CD8-positive, alpha-beta memory T cell (primary cell): ENCODE measurements at regions of chr16 and their contacts with region 1.

Region 1: DNA sequence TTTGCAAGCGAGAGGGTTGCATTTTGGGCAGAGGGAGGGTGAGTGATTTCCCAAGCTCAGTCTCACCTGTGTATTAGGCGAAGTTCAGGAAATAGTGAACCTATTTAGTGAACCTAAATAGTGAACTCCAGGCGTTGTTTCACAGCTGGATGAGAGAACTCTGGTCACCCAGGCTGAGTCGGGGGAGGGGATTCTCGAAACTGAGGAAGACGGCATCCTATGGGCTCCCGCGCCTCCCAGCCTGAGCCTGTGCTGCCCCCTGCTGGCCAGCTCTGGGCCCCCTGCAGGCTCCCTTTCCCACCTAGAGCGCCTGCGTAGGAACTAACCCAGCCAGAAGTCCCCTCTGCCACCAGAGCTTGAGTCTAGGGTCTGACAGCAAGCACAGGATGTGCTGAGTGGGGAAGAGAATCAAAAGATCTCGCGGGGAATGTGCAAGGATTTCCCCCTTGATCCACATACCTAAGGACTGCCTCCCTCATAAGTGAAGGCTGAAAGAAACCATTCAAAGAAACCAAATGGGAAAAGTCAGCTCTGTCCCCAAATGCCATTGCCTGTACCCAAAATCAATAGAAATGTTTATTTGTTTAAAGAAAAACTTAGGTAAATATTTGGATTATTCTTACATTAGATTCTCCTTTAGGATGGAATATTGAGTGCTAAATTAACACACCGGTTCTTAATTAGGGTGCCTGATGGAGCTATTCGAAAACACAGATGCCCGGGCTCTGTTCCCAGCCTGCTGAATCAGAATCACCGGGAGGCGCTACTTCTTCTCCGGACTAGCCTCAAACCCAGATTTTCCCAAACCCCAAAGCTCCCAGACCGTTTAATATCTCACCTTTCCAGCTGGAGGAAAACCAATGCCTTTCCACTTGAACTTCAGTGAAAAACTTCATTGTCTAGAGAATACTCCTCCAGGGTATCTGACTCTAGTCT is 14.8 kb upstream of the MARVELD3 start:
- DNase-seq: peak; percentile 54 to 81 (median 66)
- H3K4me3 ChIP-seq: no peak overlapping the region
- H3K4me3 Mint-ChIP-seq: peak overlapping the region in 1 of 7 donors; percentile 28
- H3K27ac ChIP-seq: no peak overlapping the region
- H3K27ac Mint-ChIP-seq: peak overlapping the region in 2 of 8 donors; percentile 29 to 51
- H3K4me1 ChIP-seq: no peaks in the 10 kb centered on the region
- H3K4me1 Mint-ChIP-seq: peaks cover 0 to 6% (median 3%) of the 10 kb centered on the region in 3 donors
- H3K27me3 ChIP-seq: no peaks in the 10 kb centered on the region
- H3K27me3 Mint-ChIP-seq: peaks cover 12 to 39% of the 10 kb centered on the region in 2 donors

Region 2: DNA sequence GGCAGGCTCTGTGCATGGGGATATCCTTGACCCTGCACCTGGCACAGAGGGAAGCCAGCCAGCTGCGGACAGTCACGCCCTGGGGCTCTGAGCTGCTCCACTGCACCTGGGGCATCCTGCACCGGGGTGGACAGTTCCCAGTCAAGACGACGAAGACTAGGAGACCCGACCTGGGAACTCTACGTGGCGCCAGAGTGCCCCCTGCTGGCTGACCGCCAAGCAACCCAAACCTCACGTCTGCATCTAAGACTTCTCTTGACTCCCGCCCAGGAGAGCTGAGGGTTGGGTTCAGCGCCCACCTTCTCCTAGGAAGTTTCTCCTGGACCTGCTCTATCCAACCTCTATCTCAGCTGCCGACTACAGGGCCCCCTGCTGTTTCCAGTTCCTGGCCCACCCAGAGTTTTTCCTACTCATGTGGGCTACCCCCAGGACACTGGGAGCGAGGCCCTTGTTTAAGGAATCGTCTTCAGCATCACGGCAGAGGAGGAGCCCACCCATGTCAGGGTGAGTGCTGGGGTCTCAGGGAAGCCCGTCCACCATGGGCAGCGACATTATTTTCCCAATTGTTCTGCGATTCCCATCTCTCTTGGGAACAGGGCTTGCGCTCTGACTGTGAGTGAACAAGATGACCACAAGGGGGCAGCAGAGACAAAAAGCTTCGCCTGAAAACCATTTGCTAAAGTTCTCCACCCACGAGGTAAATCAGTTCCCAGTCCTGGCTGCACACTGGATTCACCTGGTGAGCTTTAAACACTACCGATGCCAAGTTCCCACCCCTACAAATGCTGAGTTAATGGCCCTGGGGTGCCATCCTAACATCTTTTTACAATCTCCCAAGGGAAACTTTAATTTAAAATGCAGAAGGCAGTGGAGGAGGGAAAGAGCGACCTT is 198.7 kb before region 1 on chr16:
- CTCF ChIA-PET with region 1: interaction called, 18 read pairs
- POLR2A ChIA-PET with region 1: no interaction called
- DNase-seq: peak; percentile 46 to 67 (median 50)
- H3K4me3 ChIP-seq: no peak overlapping the region
- H3K4me3 Mint-ChIP-seq: no peak overlapping the region
- H3K27ac ChIP-seq: no peak overlapping the region
- H3K27ac Mint-ChIP-seq: no peak overlapping the region
- H3K4me1 ChIP-seq: peaks cover 6% of the 10 kb centered on the region
- H3K4me1 Mint-ChIP-seq: peaks cover 10 to 16% (median 16%) of the 10 kb centered on the region in 3 donors
- H3K27me3 ChIP-seq: no peaks in the 10 kb centered on the region
- H3K27me3 Mint-ChIP-seq: peaks cover 5 to 49% of the 10 kb centered on the region in 2 donors

Region 3: DNA sequence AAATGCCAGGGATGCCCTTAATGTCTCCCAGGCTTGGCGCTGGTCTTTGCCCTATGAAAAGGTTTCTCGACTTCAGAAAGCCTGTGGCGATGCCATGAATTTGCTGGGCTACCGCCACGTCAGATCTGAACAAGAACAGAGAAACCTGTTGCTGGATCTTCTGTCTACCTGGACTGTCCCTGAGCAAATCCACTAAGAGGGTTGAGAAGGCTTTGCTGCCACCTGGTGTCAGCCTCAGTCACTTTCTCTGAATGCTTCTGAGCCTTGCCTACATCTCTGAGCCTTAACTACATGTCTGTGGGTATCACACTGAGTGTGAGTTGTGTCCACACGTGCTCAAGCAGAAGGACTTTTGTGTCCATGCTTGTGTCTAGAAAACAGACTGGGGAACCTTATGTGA is 73.6 kb before region 1 on chr16:
- CTCF ChIA-PET with region 1: interaction called, 10 read pairs
- POLR2A ChIA-PET with region 1: no interaction called
- DNase-seq: peak in 1 of 5 donors; percentile 10
- H3K4me3 ChIP-seq: no peak overlapping the region
- H3K4me3 Mint-ChIP-seq: no peak overlapping the region
- H3K27ac ChIP-seq: no peak overlapping the region
- H3K27ac Mint-ChIP-seq: no peak overlapping the region
- H3K4me1 ChIP-seq: no peaks in the 10 kb centered on the region
- H3K4me1 Mint-ChIP-seq: peaks cover 0 to 3% (median 3%) of the 10 kb centered on the region in 3 donors
- H3K27me3 ChIP-seq: no peaks in the 10 kb centered on the region
- H3K27me3 Mint-ChIP-seq: peaks cover 7 to 10% of the 10 kb centered on the region in 2 donors

Region 4: DNA sequence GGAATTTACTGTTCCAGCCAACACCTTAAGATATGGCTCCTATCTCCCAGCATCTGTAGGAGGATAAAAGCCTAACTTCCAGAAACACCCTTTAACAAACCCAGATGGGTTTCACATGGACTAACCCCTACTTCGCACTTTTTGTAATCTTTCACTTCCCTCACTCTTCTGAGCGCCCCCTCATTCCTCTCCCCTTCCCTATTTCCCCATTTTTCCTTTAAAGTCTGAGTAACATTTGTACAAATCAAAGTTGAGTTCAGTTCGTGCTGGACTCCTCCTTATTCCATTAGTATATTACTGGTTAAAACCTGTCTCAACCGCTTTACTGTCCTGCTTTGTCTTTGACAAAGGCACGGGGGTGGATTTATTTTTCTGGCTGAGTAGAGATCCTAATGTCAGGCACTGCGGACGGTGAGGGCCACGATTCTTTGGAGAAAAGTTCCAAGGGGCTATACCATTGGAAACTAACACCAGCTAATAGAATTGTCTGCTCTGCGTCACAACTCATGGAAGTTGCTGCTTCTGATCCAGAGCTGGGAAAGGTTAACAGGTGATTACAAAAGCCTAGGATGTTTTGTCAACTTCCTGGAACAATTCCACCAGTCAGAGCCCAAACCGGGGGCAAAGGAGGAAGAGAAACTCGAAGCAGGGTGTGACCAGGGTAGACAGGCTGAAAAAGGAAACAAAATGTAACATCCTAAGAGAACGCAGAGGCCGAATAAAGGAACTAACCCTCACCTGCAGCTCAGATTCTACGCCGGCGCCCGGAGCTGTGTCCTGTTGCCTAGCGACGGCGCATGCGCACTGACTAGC is 46.8 kb before region 1 on chr16:
- CTCF ChIA-PET with region 1: interaction called, 48 read pairs
- POLR2A ChIA-PET with region 1: interaction called, 12 read pairs
- DNase-seq: peak in 1 of 5 donors; percentile 2
- H3K4me3 ChIP-seq: peak overlapping the region; percentile 67
- H3K4me3 Mint-ChIP-seq: peak overlapping the region; percentile 81 to 97 (median 90)
- H3K27ac ChIP-seq: peak overlapping the region; percentile 76
- H3K27ac Mint-ChIP-seq: peak overlapping the region; percentile 92 to 99 (median 96)
- H3K4me1 ChIP-seq: peaks cover 10% of the 10 kb centered on the region
- H3K4me1 Mint-ChIP-seq: peaks cover 16 to 18% (median 17%) of the 10 kb centered on the region in 3 donors
- H3K27me3 ChIP-seq: no peaks in the 10 kb centered on the region
- H3K27me3 Mint-ChIP-seq: peaks cover 4 to 9% of the 10 kb centered on the region in 2 donors